Activated B cell treated with CpG ODN at 0.5 μM for 24 hours (primary cell): ENCODE measurements at regions of chr10 and their contacts with region 1.

Region 1: GRCh38 chr10:125933693-125934092 is 37.3 kb downstream of the FANK1 start:
- DNase-seq: no peak
- ATAC-seq: no peak
- H3K4me3 Mint-ChIP-seq: no peak overlapping the region
- H3K27ac Mint-ChIP-seq: no peak overlapping the region
- H3K4me1 Mint-ChIP-seq: no peaks in the 10 kb centered on the region
- H3K27me3 Mint-ChIP-seq: peaks cover 20% of the 10 kb centered on the region
- CTCF ChIP-seq: no peak

Region 2: DNA sequence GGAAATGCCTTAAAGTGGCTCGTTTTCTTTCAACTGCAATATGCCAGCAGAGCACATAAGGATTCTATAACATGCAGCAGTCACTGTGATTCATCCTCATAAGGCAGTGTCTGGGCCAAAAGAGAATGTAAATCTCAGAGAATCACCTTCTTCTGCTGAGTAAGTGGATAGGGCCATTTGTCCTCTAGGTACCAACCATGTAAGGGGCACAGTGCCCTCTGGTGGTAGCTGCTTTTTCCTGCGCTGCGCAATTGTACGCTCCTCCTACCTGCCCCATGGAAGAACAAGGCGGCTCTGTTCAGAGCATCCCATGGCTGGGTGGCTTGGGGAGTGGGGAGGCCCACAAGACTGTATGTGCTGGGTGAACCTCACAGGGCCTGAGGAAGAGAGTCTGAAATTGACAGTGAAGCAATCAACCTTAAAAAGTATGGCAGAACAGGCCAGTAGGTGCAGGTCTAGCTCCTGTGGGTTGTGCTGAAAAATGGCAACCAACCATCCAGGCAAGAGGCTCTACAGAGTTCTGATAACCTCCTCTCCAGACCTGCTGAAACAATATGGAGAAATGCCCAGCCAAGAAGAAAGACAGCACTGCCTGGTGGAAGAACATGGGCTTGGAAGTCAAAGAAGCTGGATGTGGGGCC is 815.4 kb after region 1 on chr10:
- CTCF ChIA-PET with region 1: interaction called, 5 read pairs
- POLR2A ChIA-PET with region 1: no interaction called
- intact Hi-C with region 1: loop called (anchors 1 kb)
- DNase-seq: peak; percentile 22
- ATAC-seq: no peak
- H3K4me3 Mint-ChIP-seq: no peak overlapping the region
- H3K27ac Mint-ChIP-seq: no peak overlapping the region
- H3K4me1 Mint-ChIP-seq: no peaks in the 10 kb centered on the region
- H3K27me3 Mint-ChIP-seq: no peaks in the 10 kb centered on the region
- CTCF ChIP-seq: no peak